ENCODE measurements at regions of chr1 and their contacts with region 1.

Region 1: DNA sequence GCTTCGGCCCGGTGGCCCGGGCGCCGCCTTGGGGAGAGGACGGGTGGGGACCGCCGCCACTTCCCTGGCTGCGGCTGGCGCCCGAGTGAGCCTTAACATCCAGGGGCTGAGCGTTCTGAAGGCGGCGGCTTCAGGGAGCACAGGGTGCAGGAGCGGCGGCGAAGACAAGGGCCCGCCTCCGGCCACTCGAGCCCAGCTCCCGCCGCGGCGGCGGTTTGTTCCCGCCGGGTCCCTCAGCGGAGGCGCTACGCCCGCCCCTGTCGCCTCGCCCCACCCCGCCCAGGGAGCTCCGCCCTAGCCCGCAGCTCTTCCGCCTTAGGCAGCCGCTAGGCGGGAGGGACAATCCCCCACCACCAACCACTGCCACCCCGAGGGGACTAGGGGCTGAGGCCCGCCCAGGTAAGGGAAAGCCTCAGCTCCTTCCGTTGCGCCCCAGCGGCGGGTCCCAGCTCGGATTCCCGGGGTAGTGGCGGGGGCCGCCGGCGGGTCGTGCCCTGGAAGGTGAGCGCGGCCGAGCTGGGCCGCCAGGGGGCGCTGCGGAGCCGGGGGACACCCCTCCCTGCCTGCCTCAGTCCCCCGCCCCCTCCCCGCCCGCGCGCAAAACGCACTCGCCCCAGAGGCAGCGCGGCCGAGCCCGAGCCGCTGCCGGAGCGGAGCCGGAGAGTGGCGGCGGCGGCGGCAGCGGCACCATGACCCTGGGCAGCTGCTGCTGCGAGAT is at the start of gene FOXD2:
- DNase-seq: peak; percentile 95
- ATAC-seq: peak; percentile 90
- H3K4me3 Mint-ChIP-seq: peak within 1 kb of the TSS; percentile 93
- H3K27ac Mint-ChIP-seq: peak within 1 kb of the TSS; percentile 88
- H3K4me1 Mint-ChIP-seq: peaks cover 34% of the 10 kb centered on the region
- H3K27me3 Mint-ChIP-seq: peaks cover 28% of the 10 kb centered on the region
- total RNA-seq, gene FOXD2: 0.24 to 0.31 TPM

Region 2: DNA sequence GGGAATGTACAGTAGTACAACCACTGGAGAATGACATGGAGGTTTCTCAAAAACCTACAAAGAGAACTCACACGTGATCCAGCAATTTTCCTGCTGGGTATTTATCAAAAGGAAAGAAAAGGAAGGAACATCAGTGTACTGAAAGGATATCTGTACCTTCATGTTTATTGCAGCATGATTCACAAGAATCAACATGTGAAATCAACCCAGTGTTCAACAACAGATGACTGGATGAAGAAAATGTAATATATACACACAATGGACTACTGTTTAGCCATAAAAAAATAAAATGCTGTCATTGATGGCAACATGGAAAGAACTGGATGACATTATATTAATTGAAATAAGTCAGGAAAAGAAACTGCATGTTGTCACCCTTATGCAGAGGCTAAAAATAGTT is 477.4 kb before region 1 on chr1:
- CTCF ChIA-PET with region 1: no interaction called
- POLR2A ChIA-PET with region 1: no interaction called
- DNase-seq: no peak
- ATAC-seq: no peak
- H3K4me3 Mint-ChIP-seq: no peak overlapping the region
- H3K27ac Mint-ChIP-seq: no peak overlapping the region
- H3K4me1 Mint-ChIP-seq: no peaks in the 10 kb centered on the region
- H3K27me3 Mint-ChIP-seq: peaks cover 6% of the 10 kb centered on the region

Region 3: DNA sequence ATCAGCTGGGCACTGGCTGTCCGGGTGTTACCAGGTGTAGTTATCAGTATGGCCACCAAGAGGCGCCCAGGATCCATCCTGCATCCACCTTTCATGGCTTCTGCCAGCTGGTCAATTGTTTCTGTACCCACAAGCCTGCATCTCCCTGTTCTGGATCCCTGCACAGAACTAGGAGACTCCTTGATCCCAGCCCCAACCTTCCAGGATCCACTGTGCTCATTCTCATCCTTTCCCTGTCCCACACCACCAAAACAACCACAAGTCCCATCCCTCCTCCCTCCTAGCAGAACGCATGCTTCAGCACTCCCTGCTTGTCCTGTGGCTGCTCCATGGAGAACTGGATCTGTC is 48.7 kb before region 1 on chr1:
- CTCF ChIA-PET with region 1: interaction called, 21 read pairs
- POLR2A ChIA-PET with region 1: no interaction called
- DNase-seq: peak; percentile 62
- ATAC-seq: peak; percentile 67
- H3K4me3 Mint-ChIP-seq: no peak overlapping the region
- H3K27ac Mint-ChIP-seq: no peak overlapping the region
- H3K4me1 Mint-ChIP-seq: no peaks in the 10 kb centered on the region
- H3K27me3 Mint-ChIP-seq: peaks cover 14% of the 10 kb centered on the region

Region 4: DNA sequence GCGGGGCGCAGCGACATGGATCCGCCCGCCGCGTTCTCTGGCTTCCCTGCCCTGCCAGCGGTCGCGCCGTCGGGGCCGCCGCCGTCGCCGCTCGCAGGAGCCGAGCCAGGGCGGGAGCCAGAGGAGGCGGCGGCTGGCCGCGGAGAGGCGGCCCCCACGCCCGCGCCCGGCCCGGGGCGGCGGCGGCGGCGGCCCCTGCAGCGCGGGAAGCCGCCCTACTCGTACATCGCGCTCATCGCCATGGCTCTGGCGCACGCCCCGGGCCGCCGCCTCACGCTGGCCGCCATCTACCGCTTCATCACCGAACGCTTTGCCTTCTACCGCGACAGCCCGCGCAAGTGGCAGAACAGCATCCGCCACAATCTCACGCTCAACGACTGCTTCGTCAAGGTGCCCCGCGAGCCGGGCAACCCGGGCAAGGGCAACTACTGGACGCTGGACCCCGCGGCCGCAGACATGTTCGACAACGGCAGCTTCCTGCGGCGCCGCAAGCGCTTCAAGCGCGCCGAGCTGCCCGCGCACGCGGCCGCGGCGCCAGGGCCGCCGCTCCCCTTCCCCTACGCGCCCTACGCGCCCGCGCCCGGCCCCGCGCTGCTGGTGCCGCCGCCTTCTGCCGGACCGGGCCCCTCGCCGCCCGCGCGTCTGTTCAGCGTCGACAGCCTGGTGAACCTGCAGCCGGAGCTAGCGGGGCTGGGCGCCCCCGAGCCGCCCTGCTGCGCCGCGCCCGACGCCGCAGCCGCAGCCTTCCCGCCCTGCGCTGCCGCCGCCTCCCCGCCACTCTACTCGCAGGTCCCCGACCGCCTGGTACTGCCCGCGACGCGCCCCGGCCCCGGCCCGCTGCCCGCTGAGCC is 21.1 kb before region 1 on chr1:
- CTCF ChIA-PET with region 1: interaction called, 14 read pairs
- POLR2A ChIA-PET with region 1: no interaction called
- DNase-seq: no peak
- ATAC-seq: peak; percentile 57
- H3K4me3 Mint-ChIP-seq: peak overlapping the region; percentile 39
- H3K27ac Mint-ChIP-seq: no peak overlapping the region
- H3K4me1 Mint-ChIP-seq: peaks cover 7% of the 10 kb centered on the region
- H3K27me3 Mint-ChIP-seq: peaks cover 51% of the 10 kb centered on the region

Region 5: GRCh38 chr1:47449822-47450552 is 12.4 kb after region 1 on chr1:
- CTCF ChIA-PET with region 1: interaction called, 46 read pairs
- POLR2A ChIA-PET with region 1: no interaction called
- DNase-seq: no peak
- ATAC-seq: no peak
- H3K4me3 Mint-ChIP-seq: no peak overlapping the region
- H3K27ac Mint-ChIP-seq: no peak overlapping the region
- H3K4me1 Mint-ChIP-seq: peaks cover 4% of the 10 kb centered on the region
- H3K27me3 Mint-ChIP-seq: peaks cover 47% of the 10 kb centered on the region

Region 6: DNA sequence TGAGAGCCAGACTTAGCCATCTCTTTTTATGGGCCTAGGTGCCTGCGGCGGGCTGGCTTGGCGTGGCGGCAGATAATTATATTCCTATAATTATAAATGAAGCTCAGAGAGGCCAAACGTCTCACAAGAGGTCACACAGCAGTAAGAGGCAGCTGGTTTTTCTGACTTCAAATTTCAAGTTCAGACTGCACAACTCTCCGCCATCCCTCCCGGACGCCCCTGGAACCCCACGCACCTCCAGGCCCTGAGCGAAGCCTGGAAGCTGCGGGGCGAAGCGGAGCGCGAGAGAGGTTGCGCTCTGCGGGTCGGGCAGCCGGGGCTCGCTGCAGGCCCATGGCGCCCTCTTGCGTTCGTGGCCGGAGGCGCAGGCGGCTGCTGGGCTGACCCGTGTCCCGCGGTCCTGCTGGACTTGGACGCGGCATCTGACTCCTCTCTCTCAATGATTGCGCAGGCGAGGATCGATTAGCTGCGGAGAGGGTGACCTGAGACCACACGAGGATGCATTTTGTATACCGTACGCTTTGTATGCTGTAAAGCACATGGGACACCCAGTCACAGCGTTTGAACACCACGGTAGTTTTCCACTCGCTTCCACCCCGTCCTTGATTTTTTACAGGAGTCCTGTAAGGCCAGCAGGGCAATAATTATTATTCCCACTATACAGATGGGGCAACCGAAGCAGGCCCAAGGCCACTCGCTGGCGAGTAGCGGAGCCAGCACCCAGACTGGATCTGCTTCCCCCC is 272.9 kb after region 1 on chr1:
- CTCF ChIA-PET with region 1: interaction called, 71 read pairs
- POLR2A ChIA-PET with region 1: interaction called, 5 read pairs
- DNase-seq: peak; percentile 71
- ATAC-seq: peak; percentile 81
- H3K4me3 Mint-ChIP-seq: no peak overlapping the region
- H3K27ac Mint-ChIP-seq: no peak overlapping the region
- H3K4me1 Mint-ChIP-seq: peaks cover 4% of the 10 kb centered on the region
- H3K27me3 Mint-ChIP-seq: peaks cover 74% of the 10 kb centered on the region

Region 7: DNA sequence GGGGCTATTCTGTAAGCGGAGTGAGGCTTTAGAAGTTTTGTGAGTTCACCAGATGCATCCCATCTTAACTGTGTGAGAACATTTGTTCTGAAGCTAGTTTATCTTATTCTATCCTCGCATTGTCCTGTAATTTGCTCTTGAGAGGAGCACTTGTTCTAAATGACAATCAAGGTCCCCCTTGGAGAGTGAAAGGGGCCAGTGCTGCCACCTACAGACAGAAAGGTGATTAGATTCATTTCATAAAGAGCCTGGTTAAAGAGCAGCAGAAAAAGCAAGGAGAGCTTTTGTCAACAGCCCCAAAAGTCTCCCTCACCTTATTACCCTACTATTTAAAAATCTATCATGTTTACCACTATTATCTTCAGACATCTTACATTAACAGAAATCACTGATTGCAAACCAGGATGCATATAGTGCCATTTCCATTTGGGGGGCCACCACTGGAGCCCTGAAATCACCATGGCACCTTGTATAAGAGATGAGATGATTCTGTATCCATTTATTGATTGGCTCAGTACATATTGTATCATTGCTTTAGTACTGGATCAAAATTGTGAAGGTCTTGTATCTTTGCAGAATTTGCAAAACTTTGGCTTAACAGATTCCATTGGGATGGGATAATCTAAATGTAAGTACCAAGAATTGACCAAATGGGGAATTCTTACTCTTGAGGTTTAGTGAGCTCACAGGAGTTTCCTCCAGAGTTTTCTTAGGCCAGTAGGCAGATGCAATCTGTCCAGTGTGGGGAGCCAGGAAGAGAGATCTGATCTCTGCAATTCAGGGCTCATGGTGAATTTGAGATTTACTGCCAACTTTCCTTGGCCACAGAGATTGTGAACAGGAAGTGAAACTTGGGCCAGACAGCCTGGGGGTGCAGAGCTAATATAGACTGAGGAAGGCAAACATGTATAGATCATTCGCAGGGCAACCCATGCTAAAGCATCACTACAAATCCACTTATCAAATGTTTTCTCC is 623.8 kb after region 1 on chr1:
- CTCF ChIA-PET with region 1: no interaction called
- POLR2A ChIA-PET with region 1: no interaction called
- DNase-seq: peak; percentile 46
- ATAC-seq: no peak
- H3K4me3 Mint-ChIP-seq: no peak overlapping the region
- H3K27ac Mint-ChIP-seq: no peak overlapping the region
- H3K4me1 Mint-ChIP-seq: no peaks in the 10 kb centered on the region
- H3K27me3 Mint-ChIP-seq: no peaks in the 10 kb centered on the region

Measured in activated CD8-positive, alpha-beta T cell treated with anti-CD3 and anti-CD28 coated beads, Interleukin-2, amount 10 ng/mL, durations not matched to agents 7 days and 5 days (primary cell).